Heart left ventricle (tissue), 16 donors: ENCODE measurements at regions of chr17 and their contacts with region 1.

Region 1: DNA sequence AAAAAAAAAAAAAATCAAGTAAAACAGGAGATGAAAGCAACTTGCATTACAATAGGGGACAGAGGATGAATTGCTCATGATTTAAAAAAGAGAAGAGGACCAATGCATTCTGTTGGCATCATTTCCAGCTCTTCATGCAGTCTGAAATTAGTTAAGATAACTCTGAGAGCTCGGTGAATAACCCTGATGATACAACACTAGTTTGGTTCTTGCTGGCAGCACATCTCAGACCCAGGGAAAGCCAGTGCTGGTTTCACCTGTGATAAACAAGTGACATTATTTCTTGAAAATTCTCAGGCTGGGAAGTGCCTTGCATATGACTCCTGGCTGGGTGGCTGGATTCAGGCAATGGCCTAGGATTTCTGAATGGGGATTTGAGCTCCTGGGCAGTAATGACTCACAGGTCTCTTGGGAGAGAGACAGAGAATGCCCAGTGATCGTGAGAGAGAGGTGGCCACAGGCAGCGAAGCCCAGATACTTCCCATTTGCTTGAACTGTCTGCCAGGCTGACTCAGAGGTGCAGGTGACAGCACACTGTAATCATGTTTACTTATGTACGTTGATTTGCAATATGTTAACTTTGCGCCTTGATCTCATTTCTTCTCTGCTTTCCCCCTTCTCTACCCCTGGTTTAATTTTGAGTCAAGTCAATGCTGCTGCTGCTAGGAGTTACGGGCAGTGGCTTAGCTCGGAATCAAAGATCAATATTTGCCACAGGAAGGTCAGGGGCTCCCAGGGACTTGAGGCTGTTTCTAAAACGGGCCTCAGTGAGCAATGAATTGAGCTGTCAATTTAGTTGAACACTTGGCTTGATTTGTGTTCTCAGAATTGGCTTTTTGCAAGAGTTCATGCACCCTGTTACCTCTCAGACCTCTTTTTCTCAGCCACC is 27.1 kb downstream of the ARSG start:
- DNase-seq: no peak
- ATAC-seq: peak in 2 of 4 donors; percentile 9 to 41
- H3K4me3 ChIP-seq: no peak overlapping the region
- H3K27ac ChIP-seq: no peak overlapping the region
- H3K4me1 ChIP-seq: peaks cover 0 to 38% (median 0%) of the 10 kb centered on the region in 12 donors
- H3K27me3 ChIP-seq: no peaks in the 10 kb centered on the region
- CTCF ChIP-seq: no peak
- POLR2A ChIP-seq: no peak

Region 2: GRCh38 chr17:68368387-68368786 is 50.0 kb after region 1 on chr17:
- intact Hi-C with region 1: loop called in 1 of 10 experiments (anchors 10 kb)
- DNase-seq: no peak
- ATAC-seq: no peak
- H3K4me3 ChIP-seq: no peak overlapping the region
- H3K27ac ChIP-seq: no peak overlapping the region
- H3K4me1 ChIP-seq: no peaks in the 10 kb centered on the region
- H3K27me3 ChIP-seq: no peaks in the 10 kb centered on the region
- CTCF ChIP-seq: no peak
- POLR2A ChIP-seq: no peak